Activated naive CD4-positive, alpha-beta T cell treated with anti-CD3 and anti-CD28 coated beads for 36 hours (primary cell): ENCODE measurements at regions of chr19 and their contacts with region 1.

Region 1: DNA sequence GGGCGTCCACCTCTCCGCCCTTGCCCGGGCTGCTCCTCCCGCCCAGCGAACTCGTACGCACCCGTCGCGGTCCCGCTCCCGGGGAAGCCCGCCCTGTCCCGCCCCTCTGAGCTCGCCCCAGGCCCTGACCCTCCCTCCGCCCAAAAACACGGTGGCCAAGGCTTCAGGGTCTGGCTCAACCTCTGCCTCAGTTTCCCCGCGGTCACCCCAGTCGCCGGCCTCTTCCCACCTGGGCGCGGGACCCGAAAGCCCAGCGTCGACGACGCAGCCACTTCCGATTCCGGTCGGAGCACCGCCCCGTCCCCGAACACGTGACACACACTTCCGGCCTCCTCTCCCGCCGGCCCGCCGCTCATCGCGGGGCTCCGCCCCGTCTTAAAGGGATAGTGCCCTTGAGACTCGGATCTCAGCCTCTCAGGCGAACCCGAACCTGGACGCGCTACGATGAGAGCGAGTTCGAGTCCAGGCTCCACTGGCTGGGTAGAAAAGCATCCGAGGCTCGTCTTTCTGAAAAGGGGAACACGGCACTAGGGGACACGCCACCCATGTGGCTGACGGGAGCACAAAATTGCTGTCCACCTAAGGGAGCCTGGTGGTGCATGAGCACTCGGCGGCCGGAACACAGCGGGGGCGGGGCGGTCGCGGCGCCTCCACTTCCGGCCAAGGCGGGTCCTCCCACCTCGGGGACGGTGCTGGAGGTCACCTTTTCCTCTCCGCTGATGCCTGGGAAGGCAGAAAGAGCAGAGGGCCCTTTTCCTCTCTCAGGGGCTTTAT is at the start of gene C19orf25:
- DNase-seq: peak; percentile 96
- H3K4me3 Mint-ChIP-seq: peak within 1 kb of the TSS; percentile 99
- H3K27ac Mint-ChIP-seq: peak within 1 kb of the TSS; percentile 95
- H3K4me1 Mint-ChIP-seq: peaks cover 15% of the 10 kb centered on the region
- H3K27me3 Mint-ChIP-seq: no peaks in the 10 kb centered on the region
- total RNA-seq, gene C19orf25: 17.5 to 20.8 TPM

Region 2: GRCh38 chr19:1438035-1438932 is 40.8 kb before region 1 on chr19 and contains the start of gene RPS15:
- CTCF ChIA-PET with region 1: no interaction called
- intact Hi-C with region 1: loop called (anchors 5 kb)
- DNase-seq: peak; percentile 96
- H3K4me3 Mint-ChIP-seq: peak within 1 kb of the TSS; percentile 98
- H3K27ac Mint-ChIP-seq: peak within 1 kb of the TSS; percentile 99
- H3K4me1 Mint-ChIP-seq: peaks cover 40% of the 10 kb centered on the region
- H3K27me3 Mint-ChIP-seq: no peaks in the 10 kb centered on the region
- total RNA-seq, gene RPS15: 1,902 to 1,906 TPM